ENCODE measurements at regions of chr1 and their contacts with region 1.

Region 1: DNA sequence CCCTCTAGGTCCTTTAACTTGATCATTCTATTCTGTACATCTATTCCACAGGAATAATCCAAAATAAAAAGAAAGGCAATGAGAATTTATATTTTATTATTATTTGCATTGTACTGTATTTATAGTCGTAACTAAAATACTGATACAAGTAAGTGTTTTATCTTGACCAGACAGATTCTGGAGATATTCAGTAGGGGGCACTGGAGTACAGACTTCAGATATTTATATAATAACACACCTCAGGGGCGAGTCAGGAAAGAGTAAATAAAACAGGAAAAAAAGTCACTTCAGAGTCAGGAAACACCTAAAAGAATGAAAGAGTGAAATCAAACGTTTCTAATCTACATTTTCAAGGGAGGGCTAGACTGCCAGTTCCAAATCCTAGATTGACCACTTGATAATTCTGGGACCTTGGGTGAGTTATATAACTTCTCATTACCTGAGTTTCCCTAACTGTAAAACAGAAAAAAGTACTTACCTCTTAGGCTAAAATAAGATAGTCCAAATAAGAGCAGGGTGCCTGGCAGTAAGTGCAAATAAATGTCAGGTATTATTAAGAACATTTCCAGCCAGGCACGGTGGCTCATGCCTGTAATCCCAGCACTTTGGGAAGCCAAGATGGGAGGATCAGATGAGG is 31.1 kb upstream of the MTF1 start:
- DNase-seq: peak; percentile 16
- ATAC-seq: peak; percentile 86
- H3K4me3 ChIP-seq: no peak overlapping the region
- H3K27ac ChIP-seq: no peak overlapping the region
- H3K4me1 ChIP-seq: no peaks in the 10 kb centered on the region
- H3K27me3 ChIP-seq: no peaks in the 10 kb centered on the region
- CTCF ChIP-seq: peak; percentile 43 to 65 (median 45); a peak in 5 of 6 replicates
- EP300 ChIP-seq: no peak
- POLR2A ChIP-seq: no peak
- RAD21 ChIP-seq: peak; percentile 83

Region 2: GRCh38 chr1:37765916-37766664 is 124.4 kb before region 1 on chr1:
- CTCF ChIA-PET with region 1: no interaction called
- POLR2A ChIA-PET with region 1: no interaction called
- RAD21 ChIA-PET with region 1: no interaction called
- SMC1A ChIA-PET with region 1: no interaction called
- in situ Hi-C with region 1: no loop called
- intact Hi-C with region 1: no loop called
- DNase-seq: no peak
- ATAC-seq: peak; percentile 71
- H3K4me3 ChIP-seq: peak overlapping the region; percentile 18; the same call in 1 of the 2 replicates
- H3K27ac ChIP-seq: no peak overlapping the region
- H3K4me1 ChIP-seq: no peaks in the 10 kb centered on the region
- H3K27me3 ChIP-seq: peaks cover 5 to 14% of the 10 kb centered on the region in 2 experiments; a peak in 3 of 4 replicates
- CTCF ChIP-seq: peak; percentile 15 to 20 (median 19); a peak in 2 of 6 replicates
- EP300 ChIP-seq: no peak
- POLR2A ChIP-seq: no peak
- RAD21 ChIP-seq: no peak

Region 3: GRCh38 chr1:37901191-37901892 is 10.8 kb after region 1 on chr1:
- CTCF ChIA-PET with region 1: interaction called, 11 read pairs
- POLR2A ChIA-PET with region 1: no interaction called
- RAD21 ChIA-PET with region 1: interaction called, 5 read pairs
- SMC1A ChIA-PET with region 1: interaction called, 7 read pairs
- in situ Hi-C with region 1: no loop called
- intact Hi-C with region 1: no loop called
- DNase-seq: peak; percentile 61
- ATAC-seq: peak; percentile 91
- H3K4me3 ChIP-seq: no peak overlapping the region
- H3K27ac ChIP-seq: peak overlapping the region; percentile 87
- H3K4me1 ChIP-seq: peaks cover 15% of the 10 kb centered on the region
- H3K27me3 ChIP-seq: no peaks in the 10 kb centered on the region
- CTCF ChIP-seq: no peak
- EP300 ChIP-seq: 0 out of 4 replicates have a peak, but pooled peaks have one; percentile 46 to 47
- POLR2A ChIP-seq: no peak
- RAD21 ChIP-seq: no peak

Region 4: DNA sequence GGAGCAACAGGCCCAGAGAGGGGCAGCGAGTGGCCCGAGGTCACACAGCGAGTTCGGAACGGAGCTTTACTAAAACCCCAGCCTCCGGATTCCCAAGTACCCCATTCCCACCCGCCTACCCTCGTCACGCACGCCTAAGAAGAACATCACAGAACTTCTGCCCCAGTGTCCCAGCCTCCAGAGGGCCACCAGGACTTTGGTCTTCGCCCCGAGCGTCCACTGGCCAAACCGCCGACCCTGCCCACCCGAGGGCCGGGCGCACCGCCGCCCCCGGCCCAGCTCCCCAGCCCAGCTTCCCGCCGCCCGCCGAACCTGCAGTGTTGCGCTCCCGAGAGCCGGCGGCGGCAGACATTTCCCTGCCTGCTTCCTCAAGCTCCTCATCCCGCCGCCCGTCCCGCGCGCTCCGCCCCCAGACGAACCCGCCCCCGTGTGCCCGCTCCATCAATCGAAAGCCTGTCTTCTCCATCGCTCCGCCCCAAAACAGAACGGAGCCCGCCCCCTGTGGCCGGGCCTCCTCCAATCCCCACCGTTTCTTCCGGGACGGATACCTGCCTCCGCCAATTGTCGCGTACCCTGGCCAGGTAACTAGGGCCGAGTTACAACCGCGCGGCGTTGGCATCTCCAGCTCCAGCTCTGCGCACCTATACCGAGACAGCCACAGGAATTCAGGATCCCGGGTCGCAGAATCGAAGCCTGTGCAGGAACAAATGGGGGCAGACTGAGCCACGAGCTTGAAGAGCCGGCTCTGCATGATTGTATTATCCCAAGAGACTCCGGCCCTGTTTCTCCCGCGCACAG is 41.1 kb after region 1 on chr1:
- CTCF ChIA-PET with region 1: interaction called, 17 read pairs
- POLR2A ChIA-PET with region 1: interaction called, 9 read pairs
- RAD21 ChIA-PET with region 1: interaction called, 10 read pairs
- SMC1A ChIA-PET with region 1: interaction called, 10 read pairs
- in situ Hi-C with region 1: no loop called
- intact Hi-C with region 1: loop called (anchors 2 kb)
- DNase-seq: peak; percentile 86
- ATAC-seq: peak; percentile 97
- H3K4me3 ChIP-seq: peak overlapping the region; percentile 97
- H3K27ac ChIP-seq: peak overlapping the region; percentile 67
- H3K4me1 ChIP-seq: peaks cover 9% of the 10 kb centered on the region
- H3K27me3 ChIP-seq: no peaks in the 10 kb centered on the region
- CTCF ChIP-seq: no peak
- EP300 ChIP-seq: no peak
- POLR2A ChIP-seq: peak; percentile 79
- RAD21 ChIP-seq: no peak

Region 5: GRCh38 chr1:37978541-37978940 is 88.0 kb after region 1 on chr1:
- CTCF ChIA-PET with region 1: interaction called, 9 read pairs
- POLR2A ChIA-PET with region 1: no interaction called
- RAD21 ChIA-PET with region 1: no interaction called
- SMC1A ChIA-PET with region 1: interaction called, 11 read pairs
- in situ Hi-C with region 1: no loop called
- intact Hi-C with region 1: loop called (anchors 1 kb)
- DNase-seq: no peak
- ATAC-seq: no peak
- H3K4me3 ChIP-seq: no peak overlapping the region
- H3K27ac ChIP-seq: no peak overlapping the region
- H3K4me1 ChIP-seq: no peaks in the 10 kb centered on the region
- H3K27me3 ChIP-seq: no peaks in the 10 kb centered on the region
- CTCF ChIP-seq: no peak
- EP300 ChIP-seq: no peak
- POLR2A ChIP-seq: no peak
- RAD21 ChIP-seq: no peak

Region 6: DNA sequence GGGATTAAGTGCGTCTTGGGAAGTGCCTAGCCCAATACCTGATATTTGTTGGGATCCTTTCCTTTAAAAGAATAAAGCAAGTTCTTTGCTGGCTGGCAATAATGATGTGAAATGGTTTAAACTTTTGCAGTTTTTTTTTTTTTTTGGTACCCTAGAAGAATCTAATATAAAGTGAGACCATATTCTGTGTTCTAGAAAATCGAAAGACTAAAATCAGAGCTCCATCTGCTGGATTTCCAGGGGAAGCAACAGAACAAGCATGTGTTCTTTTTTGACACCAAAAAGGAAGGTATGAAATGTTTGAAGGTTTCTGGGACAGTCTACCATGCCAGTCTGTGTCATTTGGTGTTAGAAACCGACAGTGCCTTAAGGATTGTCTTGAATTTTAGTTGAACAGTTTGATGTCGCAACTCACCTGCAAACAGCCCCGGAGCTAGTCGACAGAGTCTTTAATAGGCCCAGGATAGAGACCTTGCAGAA is 128.4 kb after region 1 on chr1:
- CTCF ChIA-PET with region 1: interaction called, 5 read pairs
- POLR2A ChIA-PET with region 1: no interaction called
- RAD21 ChIA-PET with region 1: interaction called, 4 read pairs
- SMC1A ChIA-PET with region 1: interaction called, 10 read pairs
- in situ Hi-C with region 1: no loop called
- intact Hi-C with region 1: loop called (anchors 1 kb)
- DNase-seq: no peak
- ATAC-seq: peak; percentile 71
- H3K4me3 ChIP-seq: no peak overlapping the region
- H3K27ac ChIP-seq: no peak overlapping the region
- H3K4me1 ChIP-seq: no peaks in the 10 kb centered on the region
- H3K27me3 ChIP-seq: no peaks in the 10 kb centered on the region
- CTCF ChIP-seq: peak; percentile 47 to 69 (median 54); a peak in 4 of 6 replicates
- EP300 ChIP-seq: no peak
- POLR2A ChIP-seq: no peak
- RAD21 ChIP-seq: peak; percentile 62

Region 7: GRCh38 chr1:38114241-38115026 is 223.9 kb after region 1 on chr1:
- CTCF ChIA-PET with region 1: no interaction called
- POLR2A ChIA-PET with region 1: no interaction called
- RAD21 ChIA-PET with region 1: no interaction called
- SMC1A ChIA-PET with region 1: no interaction called
- in situ Hi-C with region 1: no loop called
- intact Hi-C with region 1: no loop called
- DNase-seq: no peak
- ATAC-seq: no peak
- H3K4me3 ChIP-seq: no peak overlapping the region
- H3K27ac ChIP-seq: no peak overlapping the region
- H3K4me1 ChIP-seq: no peaks in the 10 kb centered on the region
- H3K27me3 ChIP-seq: no peaks in the 10 kb centered on the region
- CTCF ChIP-seq: no peak
- EP300 ChIP-seq: no peak
- POLR2A ChIP-seq: no peak
- RAD21 ChIP-seq: no peak